Motor neuron (in vitro differentiated cells): ENCODE measurements at regions of chr1 and their contacts with region 1.

Region 1: GRCh38 chr1:39575191-39576015 is 1.2 kb downstream of the PABPC4 start:
- ATAC-seq: peak; percentile 12 to 61 (median 54)
- H3K4me3 ChIP-seq: peak overlapping the region; percentile 57 to 85 (median 63)
- H3K27ac ChIP-seq: peak overlapping the region; percentile 25 to 78
- H3K4me1 ChIP-seq: peaks cover 25 to 29% of the 10 kb centered on the region in 2 donors

Region 2: GRCh38 chr1:39453603-39454002 is 121.8 kb before region 1 on chr1:
- in situ Hi-C with region 1: loop called in 1 of 9 experiments (anchors 25 kb)
- ATAC-seq: peak in 2 of 8 experiments; percentile 28 to 71
- H3K4me3 ChIP-seq: no peak overlapping the region
- H3K27ac ChIP-seq: no peak overlapping the region
- H3K4me1 ChIP-seq: no peaks in the 10 kb centered on the region

Region 3: GRCh38 chr1:39720094-39720999 is 144.9 kb after region 1 on chr1:
- in situ Hi-C with region 1: loop called in 1 of 9 experiments (anchors 25 kb)
- ATAC-seq: peak; percentile 56 to 86 (median 71)
- H3K4me3 ChIP-seq: no peak overlapping the region
- H3K27ac ChIP-seq: no peak overlapping the region
- H3K4me1 ChIP-seq: peaks cover 3 to 9% of the 10 kb centered on the region in 2 donors